ENCODE measurements at regions of chr17 and their contacts with region 1.

Region 1: DNA sequence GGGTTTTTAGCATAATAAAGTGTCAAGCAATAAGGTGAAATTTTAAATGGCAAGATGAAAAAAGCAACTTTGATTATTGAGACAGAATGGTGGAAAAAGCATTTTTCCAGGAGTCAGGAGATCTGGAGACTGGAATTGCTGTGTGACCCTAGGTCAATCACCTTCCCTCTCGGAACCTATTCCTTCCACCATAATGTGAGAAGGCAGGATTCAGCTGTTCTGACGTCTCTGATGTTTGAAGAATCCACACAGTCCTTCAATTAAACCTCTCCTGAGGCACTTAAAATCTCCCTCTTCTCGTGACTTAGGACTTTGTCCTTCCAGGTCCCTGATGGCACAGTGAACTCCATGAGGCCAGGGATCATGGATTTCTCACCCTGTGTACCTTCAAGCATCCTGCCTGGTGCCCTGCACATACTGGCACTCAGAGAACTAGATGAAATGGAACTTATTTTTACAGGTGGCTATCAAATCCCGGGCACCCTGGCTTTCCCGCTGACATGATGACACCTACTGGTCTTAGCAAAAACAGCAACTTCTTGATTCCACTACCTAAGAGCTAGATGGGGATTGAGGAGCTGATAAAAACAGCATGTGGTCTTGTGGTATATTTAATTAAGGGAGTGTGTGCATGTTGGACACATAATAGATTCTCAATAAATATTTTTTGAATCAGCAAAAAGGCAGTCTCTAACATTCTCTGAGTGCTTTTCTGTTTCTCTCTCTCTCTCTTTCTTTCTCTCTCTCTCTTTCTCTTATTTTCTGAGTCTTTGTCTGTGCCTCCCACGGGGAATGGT is 2.3 kb upstream of the CCDC182 start:
- DNase-seq: peak; percentile 45
- H3K4me3 Mint-ChIP-seq: no peak overlapping the region
- H3K27ac Mint-ChIP-seq: no peak overlapping the region
- H3K4me1 Mint-ChIP-seq: peaks cover 8% of the 10 kb centered on the region
- H3K27me3 Mint-ChIP-seq: peaks cover 15% of the 10 kb centered on the region

Region 2: GRCh38 chr17:57130761-57131461 is 616.5 kb before region 1 on chr17:
- CTCF ChIA-PET with region 1: interaction called, 16 read pairs
- POLR2A ChIA-PET with region 1: no interaction called
- DNase-seq: peak; percentile 82
- H3K4me3 Mint-ChIP-seq: no peak overlapping the region
- H3K27ac Mint-ChIP-seq: no peak overlapping the region
- H3K4me1 Mint-ChIP-seq: peaks cover 6% of the 10 kb centered on the region
- H3K27me3 Mint-ChIP-seq: no peaks in the 10 kb centered on the region